ENCODE measurements at regions of chr10 and their contacts with region 1.

Region 1: DNA sequence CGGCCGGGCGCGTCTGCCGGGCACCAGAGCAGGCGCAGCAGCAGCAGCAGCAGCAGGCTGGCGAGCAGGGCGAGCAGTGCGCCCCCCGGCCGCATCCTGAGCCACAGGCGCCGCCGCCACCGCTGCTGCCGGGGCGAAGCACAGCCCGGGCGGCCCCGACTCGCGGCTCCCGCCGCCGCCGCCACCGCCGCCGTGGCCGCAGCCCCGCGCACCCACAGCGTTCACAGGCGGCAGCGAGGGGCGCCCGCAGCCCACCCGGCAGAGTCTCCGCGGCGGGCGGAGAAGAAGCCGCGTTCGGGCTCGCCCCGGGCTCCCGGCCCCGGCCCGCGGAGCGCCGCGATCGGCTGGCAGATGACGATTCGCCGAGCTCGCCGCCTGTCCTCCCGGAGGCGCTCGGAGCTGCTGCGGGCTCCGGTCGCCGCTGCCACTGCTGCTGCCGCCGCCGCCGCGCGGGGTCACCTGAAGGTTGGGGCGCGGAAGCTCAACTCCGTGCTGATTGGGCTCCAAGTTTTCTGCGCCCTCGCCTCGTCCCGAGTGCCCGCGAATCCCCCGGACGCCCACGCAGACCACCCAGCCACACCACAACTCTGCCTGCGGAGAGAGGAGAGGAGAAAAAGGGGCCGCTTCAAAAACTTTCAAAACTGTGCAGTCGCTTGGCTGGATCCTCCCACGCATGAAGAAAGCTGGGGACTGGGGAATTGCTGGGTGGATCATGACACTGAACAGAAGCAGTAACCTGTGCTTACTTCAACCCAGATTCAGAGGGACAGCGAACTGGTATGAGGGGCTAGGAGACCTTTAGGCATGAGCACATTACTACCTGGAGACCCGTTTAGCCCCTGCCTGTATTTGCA is at the start of gene ST8SIA6:
- H3K4me3 Mint-ChIP-seq: peak within 1 kb of the TSS; percentile 92
- H3K27ac Mint-ChIP-seq: peak within 1 kb of the TSS; percentile 88
- H3K4me1 Mint-ChIP-seq: peaks cover 37% of the 10 kb centered on the region
- H3K27me3 Mint-ChIP-seq: peaks cover 24% of the 10 kb centered on the region

Region 2: GRCh38 chr10:17375936-17376584 is 78.3 kb before region 1 on chr10:
- intact Hi-C with region 1: no loop called
- H3K4me3 Mint-ChIP-seq: no peak overlapping the region
- H3K27ac Mint-ChIP-seq: no peak overlapping the region
- H3K4me1 Mint-ChIP-seq: no peaks in the 10 kb centered on the region
- H3K27me3 Mint-ChIP-seq: no peaks in the 10 kb centered on the region

Region 3: DNA sequence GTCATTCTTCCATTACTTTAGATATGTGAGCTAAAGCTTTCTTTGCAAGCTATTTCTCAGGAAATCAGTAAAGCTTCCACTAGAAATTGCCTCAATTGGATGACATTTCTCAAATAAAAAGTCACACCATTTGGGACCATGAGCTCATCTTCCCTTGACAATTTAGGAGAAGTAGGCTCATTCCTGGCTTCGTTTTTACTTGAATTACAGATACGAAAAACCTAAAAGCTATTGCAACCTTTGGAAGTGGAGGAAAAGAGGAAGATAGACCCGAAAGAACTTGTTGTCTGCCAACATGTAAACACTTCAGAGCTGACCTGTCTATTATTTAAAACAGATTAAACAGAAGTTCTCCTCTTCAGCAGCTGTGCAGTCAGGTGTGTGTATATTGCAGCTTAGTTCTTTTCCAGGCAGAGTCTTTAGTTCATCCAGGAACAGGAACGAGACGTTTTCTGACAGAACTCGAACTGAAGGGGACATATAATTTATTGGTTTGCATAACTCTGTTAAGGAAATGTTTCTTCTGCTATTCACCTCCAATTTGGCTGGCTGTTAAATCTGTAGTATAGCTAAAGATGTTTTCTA is 43.1 kb after region 1 on chr10:
- intact Hi-C with region 1: loop called (anchors 5 kb)
- H3K4me3 Mint-ChIP-seq: no peak overlapping the region
- H3K27ac Mint-ChIP-seq: peak overlapping the region; percentile 45
- H3K4me1 Mint-ChIP-seq: peaks cover 21% of the 10 kb centered on the region
- H3K27me3 Mint-ChIP-seq: no peaks in the 10 kb centered on the region

Region 4: GRCh38 chr10:18087355-18087754 is 633.0 kb after region 1 on chr10:
- intact Hi-C with region 1: no loop called
- H3K4me3 Mint-ChIP-seq: no peak overlapping the region
- H3K27ac Mint-ChIP-seq: no peak overlapping the region
- H3K4me1 Mint-ChIP-seq: no peaks in the 10 kb centered on the region
- H3K27me3 Mint-ChIP-seq: peaks cover 5% of the 10 kb centered on the region

Region 5: GRCh38 chr10:18497964-18498363 is 1043.6 kb after region 1 on chr10:
- intact Hi-C with region 1: no loop called
- H3K4me3 Mint-ChIP-seq: no peak overlapping the region
- H3K27ac Mint-ChIP-seq: no peak overlapping the region
- H3K4me1 Mint-ChIP-seq: no peaks in the 10 kb centered on the region
- H3K27me3 Mint-ChIP-seq: no peaks in the 10 kb centered on the region

Measured in dendritic cell treated with granulocyte-macrophage colony-stimulating factor and Interleukin-4, amounts not matched to agents 40 ng/mL and 50 ng/mL, for 4 days (primary cell).